CD4-positive, alpha-beta memory T cell (primary cell): ENCODE measurements at regions of chr7 and their contacts with region 1.

Region 1: DNA sequence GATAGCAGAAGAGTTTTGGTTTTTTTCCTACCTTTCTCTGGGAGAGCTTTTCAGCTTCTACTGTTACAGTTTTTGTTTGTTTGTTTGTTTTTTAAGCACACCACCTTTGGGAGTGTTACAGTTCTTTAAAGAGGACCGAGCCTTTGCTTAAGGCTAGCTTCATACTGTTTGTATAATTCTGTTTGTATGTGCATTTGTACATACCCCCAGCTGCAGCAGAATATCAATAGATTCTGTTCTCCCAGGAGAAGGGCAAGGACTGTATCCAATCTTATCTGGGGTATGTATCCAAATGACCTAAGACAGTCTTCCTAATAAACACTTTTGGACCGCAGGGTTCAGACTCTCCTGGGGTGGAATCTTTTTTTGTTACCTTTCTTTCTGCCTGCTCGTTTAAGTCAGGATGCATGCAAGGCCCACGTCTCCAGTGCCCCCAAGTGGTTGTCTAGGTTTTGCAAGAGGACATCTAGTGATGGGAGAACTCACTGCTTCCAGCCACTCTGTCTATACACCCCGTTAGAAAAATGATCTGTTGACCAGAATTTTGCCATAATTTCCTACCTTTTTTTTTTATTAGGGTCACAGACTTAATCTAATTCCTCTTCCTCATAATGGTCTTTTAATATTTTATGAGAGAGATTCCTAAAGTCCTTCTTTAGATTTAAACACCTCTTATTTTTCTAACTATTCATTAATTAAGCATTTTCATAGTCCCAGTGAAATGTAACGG is 23.9 kb downstream of the NRF1 start:
- DNase-seq: peak; percentile 58 to 70 (median 63)
- H3K4me3 ChIP-seq: no peak overlapping the region
- H3K4me3 Mint-ChIP-seq: peak overlapping the region in 1 of 8 donors; percentile 21
- H3K27ac ChIP-seq: no peak overlapping the region
- H3K27ac Mint-ChIP-seq: peak overlapping the region; percentile 5 to 73 (median 60)
- H3K4me1 ChIP-seq: peaks cover 8% of the 10 kb centered on the region
- H3K4me1 Mint-ChIP-seq: peaks cover 27 to 45% (median 30%) of the 10 kb centered on the region in 4 donors
- H3K27me3 ChIP-seq: no peaks in the 10 kb centered on the region
- H3K27me3 Mint-ChIP-seq: no peaks in the 10 kb centered on the region

Region 2: DNA sequence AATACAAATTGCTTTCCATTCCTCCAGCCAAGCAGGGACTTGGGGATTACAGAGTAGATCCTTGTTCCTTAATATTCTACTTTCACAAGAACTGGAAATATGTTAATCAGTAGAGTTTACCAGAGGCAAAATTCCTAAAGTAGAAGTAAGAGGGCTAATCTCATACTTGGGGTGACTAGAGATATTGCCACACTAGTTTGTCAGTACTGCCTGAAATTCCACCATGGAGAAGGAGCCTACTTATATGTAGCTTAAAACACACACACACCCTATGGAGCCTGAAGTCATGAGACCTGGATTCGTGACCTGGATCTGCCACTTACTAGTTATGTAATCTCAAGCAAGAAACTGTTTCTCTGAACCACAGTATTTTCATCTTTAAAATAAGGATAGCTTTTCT is 167.4 kb before region 1 on chr7:
- CTCF ChIA-PET with region 1: no interaction called
- POLR2A ChIA-PET with region 1: no interaction called
- intact Hi-C with region 1: loop called (anchors 1 kb)
- DNase-seq: no peak
- H3K4me3 ChIP-seq: no peak overlapping the region
- H3K4me3 Mint-ChIP-seq: no peak overlapping the region
- H3K27ac ChIP-seq: no peak overlapping the region
- H3K27ac Mint-ChIP-seq: no peak overlapping the region
- H3K4me1 ChIP-seq: no peaks in the 10 kb centered on the region
- H3K4me1 Mint-ChIP-seq: no peaks in the 10 kb centered on the region
- H3K27me3 ChIP-seq: no peaks in the 10 kb centered on the region
- H3K27me3 Mint-ChIP-seq: no peaks in the 10 kb centered on the region

Region 3: GRCh38 chr7:129617652-129618051 is 17.8 kb before region 1 on chr7:
- CTCF ChIA-PET with region 1: interaction called, 13 read pairs
- POLR2A ChIA-PET with region 1: no interaction called
- intact Hi-C with region 1: loop called (anchors 1 kb)
- DNase-seq: no peak
- H3K4me3 ChIP-seq: no peak overlapping the region
- H3K4me3 Mint-ChIP-seq: peak overlapping the region in 6 of 8 donors; percentile 4 to 28 (median 12)
- H3K27ac ChIP-seq: no peak overlapping the region
- H3K27ac Mint-ChIP-seq: peak overlapping the region in 1 of 7 donors; percentile 28
- H3K4me1 ChIP-seq: peaks cover 69% of the 10 kb centered on the region
- H3K4me1 Mint-ChIP-seq: peaks cover 51 to 85% (median 66%) of the 10 kb centered on the region in 4 donors
- H3K27me3 ChIP-seq: no peaks in the 10 kb centered on the region
- H3K27me3 Mint-ChIP-seq: no peaks in the 10 kb centered on the region

Region 4: GRCh38 chr7:129664029-129665012 is 28.9 kb after region 1 on chr7:
- CTCF ChIA-PET with region 1: no interaction called
- POLR2A ChIA-PET with region 1: no interaction called
- intact Hi-C with region 1: no loop called
- DNase-seq: peak in 4 of 5 donors; percentile 7 to 13 (median 10)
- H3K4me3 ChIP-seq: no peak overlapping the region
- H3K4me3 Mint-ChIP-seq: no peak overlapping the region
- H3K27ac ChIP-seq: no peak overlapping the region
- H3K27ac Mint-ChIP-seq: peak overlapping the region in 1 of 7 donors; percentile 24
- H3K4me1 ChIP-seq: no peaks in the 10 kb centered on the region
- H3K4me1 Mint-ChIP-seq: peaks cover 5 to 10% (median 7%) of the 10 kb centered on the region in 4 donors
- H3K27me3 ChIP-seq: no peaks in the 10 kb centered on the region
- H3K27me3 Mint-ChIP-seq: no peaks in the 10 kb centered on the region